ENCODE measurements at regions of chr11 and their contacts with region 1.

Region 1: GRCh38 chr11:112961146-112961668 is at the start of gene NCAM1:
- DNase-seq: peak; percentile 90
- total RNA-seq, gene NCAM1: 472 TPM

Region 2: GRCh38 chr11:112588252-112588694 is 372.9 kb before region 1 on chr11:
- intact Hi-C with region 1: loop called (anchors 5 kb)
- DNase-seq: no peak

Region 3: GRCh38 chr11:112655371-112655770 is 305.8 kb before region 1 on chr11:
- intact Hi-C with region 1: loop called (anchors 2 kb)
- DNase-seq: peak; percentile 86

Region 4: GRCh38 chr11:112795142-112795815 is 165.9 kb before region 1 on chr11:
- intact Hi-C with region 1: loop called (anchors 5 kb)
- DNase-seq: no peak

Region 5: DNA sequence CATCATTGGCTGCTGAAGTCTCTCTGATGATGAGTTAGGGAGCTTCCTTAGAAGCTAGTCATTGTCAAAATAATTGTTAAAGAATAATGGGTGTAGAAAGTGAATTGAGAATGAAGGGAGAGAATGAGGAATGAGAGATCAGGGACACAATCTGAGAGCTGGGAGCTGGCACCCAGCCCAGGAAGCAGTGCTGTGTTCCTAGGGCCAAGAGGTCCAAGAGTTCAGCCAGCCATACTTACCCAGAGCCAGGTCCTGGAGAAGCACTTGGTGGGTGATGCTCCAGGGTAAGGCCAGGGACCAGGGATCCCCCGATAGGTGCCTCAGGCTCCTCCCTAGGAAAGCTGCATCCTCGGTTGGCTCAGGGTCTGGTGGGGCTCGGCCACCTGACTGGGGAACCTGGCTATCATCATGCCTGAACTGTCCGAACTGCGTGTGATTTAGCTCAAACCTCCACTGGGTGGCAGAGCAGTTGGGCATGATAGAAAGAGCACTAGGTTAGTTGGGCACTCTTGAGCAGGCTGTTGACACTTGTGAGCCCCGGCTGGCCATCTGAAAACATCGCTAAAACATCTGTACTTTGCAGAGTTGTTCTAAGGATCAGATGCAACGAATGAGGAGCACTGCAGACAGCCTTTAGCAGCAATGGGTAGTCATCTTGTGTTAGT is 123.9 kb before region 1 on chr11:
- intact Hi-C with region 1: loop called (anchors 2 kb)
- DNase-seq: no peak

Region 6: GRCh38 chr11:113119074-113119473 is 157.9 kb after region 1 on chr11:
- intact Hi-C with region 1: loop called (anchors 5 kb)
- DNase-seq: no peak

Region 7: DNA sequence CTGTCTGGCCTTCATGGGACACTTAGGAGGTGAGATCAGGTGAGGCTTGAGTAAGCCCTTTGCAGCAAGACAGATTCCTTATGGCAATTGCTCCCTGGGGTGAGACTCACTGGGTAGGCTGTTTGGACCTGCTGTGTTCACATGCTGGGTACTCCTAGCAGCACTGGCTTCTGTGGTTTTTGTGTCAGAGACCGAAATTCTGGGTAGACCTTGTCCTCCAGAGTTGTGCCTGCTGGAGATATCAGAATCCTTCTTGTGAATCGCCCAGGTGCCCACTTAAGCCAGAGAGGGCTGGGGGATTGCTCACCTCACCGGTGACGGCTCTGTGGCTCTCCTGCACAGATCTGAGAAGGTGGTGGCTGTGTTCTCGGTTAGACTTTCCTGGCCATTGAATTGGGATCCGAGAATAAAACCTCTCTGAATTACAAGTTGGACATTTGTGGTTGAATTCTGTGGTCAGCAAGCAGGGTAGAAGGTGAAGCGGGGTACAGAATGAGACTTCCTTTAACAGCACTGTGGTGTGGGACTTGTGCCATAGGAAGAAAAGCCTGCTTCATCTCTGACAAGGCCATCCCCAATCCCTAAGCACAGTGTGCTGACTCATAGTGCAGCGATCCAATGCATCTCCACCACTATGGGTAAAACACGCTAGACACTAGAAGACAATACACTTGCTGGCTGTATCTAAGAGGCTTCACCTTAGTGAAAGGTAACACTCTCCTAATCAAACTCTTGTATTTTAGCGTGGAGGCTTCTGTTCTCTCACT is 300.7 kb after region 1 on chr11:
- intact Hi-C with region 1: loop called (anchors 10 kb)
- DNase-seq: no peak